ENCODE measurements at regions of chr20 and their contacts with region 1.

Region 1: DNA sequence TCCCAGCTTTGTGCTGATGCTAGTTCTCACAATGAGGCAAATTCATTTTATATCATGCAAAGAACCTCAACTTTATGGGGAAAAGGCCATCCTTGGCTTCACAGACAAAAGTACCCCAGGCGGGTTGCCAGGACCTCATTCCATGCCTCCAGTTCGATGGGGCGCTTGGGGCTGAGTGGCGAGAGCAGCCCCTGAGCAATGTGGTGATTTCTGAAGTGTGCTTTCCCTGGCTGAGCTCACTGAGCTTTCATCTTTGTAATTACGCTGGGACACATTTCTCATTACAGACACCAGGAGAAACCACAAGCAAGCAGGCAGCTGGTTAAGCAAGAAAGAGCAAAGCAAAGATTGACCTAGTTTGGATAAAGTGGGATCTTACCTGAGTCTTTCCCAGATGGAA is 301.5 kb upstream of the CDH4 start:
- DNase-seq: no peak
- ATAC-seq: no peak
- H3K4me3 ChIP-seq: no peak overlapping the region
- H3K27ac ChIP-seq: no peak overlapping the region
- H3K4me1 ChIP-seq: no peaks in the 10 kb centered on the region
- H3K27me3 ChIP-seq: no peaks in the 10 kb centered on the region
- CTCF ChIP-seq: no peak
- EP300 ChIP-seq: no peak
- POLR2A ChIP-seq: no peak
- RAD21 ChIP-seq: no peak

Region 2: DNA sequence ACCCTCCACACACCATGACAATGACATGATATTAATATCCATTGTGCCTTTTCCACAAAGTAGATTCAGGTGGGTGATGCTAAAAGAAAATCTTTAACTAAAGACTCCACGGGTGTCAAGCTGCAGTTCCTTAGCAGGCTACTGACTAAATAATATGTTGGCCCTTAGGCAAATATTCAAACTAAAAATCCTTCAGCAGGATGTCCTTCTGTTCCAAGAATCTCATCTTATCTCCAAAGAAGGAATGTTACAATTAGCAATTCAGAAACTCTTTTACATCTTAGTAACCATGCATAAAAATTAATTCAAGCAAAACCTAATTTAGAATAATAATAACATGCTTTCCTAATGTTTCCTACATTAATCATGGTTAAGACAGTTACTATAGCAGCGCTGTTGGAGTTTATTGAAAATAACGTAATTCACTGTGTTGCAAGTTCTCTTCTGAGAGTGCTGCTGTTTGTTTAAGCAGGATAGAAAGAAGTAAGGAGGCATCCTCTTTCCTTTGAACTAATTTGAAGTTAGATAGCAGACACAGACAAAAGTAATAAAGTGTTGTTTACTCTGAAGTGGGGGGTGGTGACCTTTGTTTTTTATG is 113.3 kb before region 1 on chr20:
- CTCF ChIA-PET with region 1: no interaction called
- POLR2A ChIA-PET with region 1: no interaction called
- RAD21 ChIA-PET with region 1: no interaction called
- SMC1A ChIA-PET with region 1: no interaction called
- in situ Hi-C with region 1: no loop called
- intact Hi-C with region 1: no loop called
- DNase-seq: no peak
- ATAC-seq: no peak
- H3K4me3 ChIP-seq: no peak overlapping the region
- H3K27ac ChIP-seq: no peak overlapping the region
- H3K4me1 ChIP-seq: no peaks in the 10 kb centered on the region
- H3K27me3 ChIP-seq: no peaks in the 10 kb centered on the region
- CTCF ChIP-seq: no peak
- EP300 ChIP-seq: no peak
- POLR2A ChIP-seq: no peak
- RAD21 ChIP-seq: no peak

Region 3: GRCh38 chr20:60967431-60968316 is 17.1 kb after region 1 on chr20:
- CTCF ChIA-PET with region 1: no interaction called
- POLR2A ChIA-PET with region 1: no interaction called
- RAD21 ChIA-PET with region 1: no interaction called
- SMC1A ChIA-PET with region 1: no interaction called
- in situ Hi-C with region 1: no loop called
- intact Hi-C with region 1: no loop called
- DNase-seq: no peak
- ATAC-seq: no peak
- H3K4me3 ChIP-seq: no peak overlapping the region
- H3K27ac ChIP-seq: no peak overlapping the region
- H3K4me1 ChIP-seq: no peaks in the 10 kb centered on the region
- H3K27me3 ChIP-seq: no peaks in the 10 kb centered on the region
- CTCF ChIP-seq: no peak
- EP300 ChIP-seq: no peak
- POLR2A ChIP-seq: no peak
- RAD21 ChIP-seq: no peak

Region 4: GRCh38 chr20:61055180-61056010 is 104.8 kb after region 1 on chr20:
- CTCF ChIA-PET with region 1: no interaction called
- POLR2A ChIA-PET with region 1: no interaction called
- RAD21 ChIA-PET with region 1: no interaction called
- SMC1A ChIA-PET with region 1: no interaction called
- in situ Hi-C with region 1: loop called (anchors 25 kb)
- intact Hi-C with region 1: no loop called
- DNase-seq: no peak
- ATAC-seq: no peak
- H3K4me3 ChIP-seq: no peak overlapping the region
- H3K27ac ChIP-seq: no peak overlapping the region
- H3K4me1 ChIP-seq: no peaks in the 10 kb centered on the region
- H3K27me3 ChIP-seq: no peaks in the 10 kb centered on the region
- CTCF ChIP-seq: no peak
- EP300 ChIP-seq: no peak
- POLR2A ChIP-seq: no peak
- RAD21 ChIP-seq: no peak

Region 5: GRCh38 chr20:61127311-61128039 is 176.9 kb after region 1 on chr20:
- CTCF ChIA-PET with region 1: no interaction called
- POLR2A ChIA-PET with region 1: no interaction called
- RAD21 ChIA-PET with region 1: no interaction called
- SMC1A ChIA-PET with region 1: no interaction called
- in situ Hi-C with region 1: no loop called
- intact Hi-C with region 1: no loop called
- DNase-seq: no peak
- ATAC-seq: no peak
- H3K4me3 ChIP-seq: no peak overlapping the region
- H3K27ac ChIP-seq: no peak overlapping the region
- H3K4me1 ChIP-seq: no peaks in the 10 kb centered on the region
- H3K27me3 ChIP-seq: no peaks in the 10 kb centered on the region
- CTCF ChIP-seq: no peak
- EP300 ChIP-seq: no peak
- POLR2A ChIP-seq: no peak
- RAD21 ChIP-seq: no peak

Region 6: DNA sequence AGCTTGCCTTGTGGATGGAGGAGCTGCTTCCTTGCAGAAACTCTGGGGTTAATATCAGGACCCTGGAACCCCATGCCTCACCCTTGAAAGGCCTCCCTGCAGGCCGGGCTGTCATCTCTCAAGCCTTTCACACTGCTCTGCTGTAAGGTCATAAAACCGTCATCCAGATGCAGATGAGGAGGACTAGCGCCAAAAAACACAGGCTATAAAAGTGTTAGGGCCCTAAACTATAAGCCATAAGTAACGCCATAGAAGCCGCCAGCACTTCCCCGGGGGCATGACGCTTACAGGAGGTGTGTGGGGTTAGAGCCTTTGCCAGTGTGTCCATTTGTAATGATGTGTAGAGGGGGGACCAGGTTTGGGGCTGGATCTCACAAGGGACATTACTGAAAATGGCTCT is 349.1 kb after region 1 on chr20:
- CTCF ChIA-PET with region 1: no interaction called
- POLR2A ChIA-PET with region 1: no interaction called
- RAD21 ChIA-PET with region 1: no interaction called
- SMC1A ChIA-PET with region 1: no interaction called
- in situ Hi-C with region 1: loop called (anchors 25 kb)
- intact Hi-C with region 1: no loop called
- DNase-seq: no peak
- ATAC-seq: no peak
- H3K4me3 ChIP-seq: no peak overlapping the region
- H3K27ac ChIP-seq: no peak overlapping the region
- H3K4me1 ChIP-seq: no peaks in the 10 kb centered on the region
- H3K27me3 ChIP-seq: no peaks in the 10 kb centered on the region
- CTCF ChIP-seq: no peak
- EP300 ChIP-seq: no peak
- POLR2A ChIP-seq: no peak
- RAD21 ChIP-seq: no peak